PC-9 (cell line): ENCODE measurements at regions of chr16 and their contacts with region 1.

Region 1: DNA sequence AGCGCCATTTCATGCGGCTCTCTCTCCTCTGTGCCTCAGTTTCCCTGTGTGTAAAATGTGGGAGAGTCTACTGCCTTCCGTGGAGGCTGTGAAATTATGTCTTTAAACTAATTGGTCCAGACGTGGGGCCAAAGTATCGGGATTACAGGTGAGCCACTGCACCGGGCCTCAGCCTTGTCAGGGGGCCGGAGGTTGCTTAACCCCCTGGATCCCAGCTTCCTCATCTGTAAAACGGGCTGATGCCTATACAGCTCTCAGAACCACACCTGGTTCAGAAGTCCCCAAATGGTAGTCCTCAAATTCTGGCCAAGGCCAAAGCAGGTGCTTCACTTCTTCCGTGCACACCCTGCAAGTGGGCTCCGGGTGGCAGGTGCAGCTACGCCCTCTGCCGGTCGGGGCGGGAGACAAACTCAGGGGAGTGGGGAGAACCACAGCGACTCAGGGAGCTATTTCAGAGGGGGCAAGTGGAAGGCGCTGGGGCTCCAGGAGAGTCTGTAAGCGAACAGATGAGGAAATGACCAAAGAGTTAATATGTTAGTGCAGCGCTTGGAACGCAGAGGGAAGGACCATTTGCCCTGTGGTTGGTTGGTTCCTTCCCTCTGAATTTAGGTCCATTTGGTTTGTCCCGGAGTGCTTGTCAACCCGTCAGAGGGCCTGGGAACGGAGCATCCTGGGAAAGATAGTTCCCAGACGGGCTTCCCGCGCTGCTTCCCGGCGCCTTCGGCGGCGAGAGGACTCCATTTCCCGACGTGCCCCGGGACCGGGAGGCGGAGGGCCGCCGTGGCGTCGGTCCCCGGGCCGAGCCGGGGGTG is at the start of gene MGRN1:
- DNase-seq: peak; percentile 90 to 97
- H3K4me3 ChIP-seq: peak within 1 kb of the TSS; percentile 99
- H3K27ac ChIP-seq: peak within 1 kb of the TSS; percentile 69
- H3K4me1 ChIP-seq: peaks cover 7% of the 10 kb centered on the region
- H3K27me3 ChIP-seq: no peaks in the 10 kb centered on the region
- CTCF ChIP-seq: peak; percentile 96
- total RNA-seq, gene MGRN1: 67.9 and 70.4 TPM in 2 replicates

Region 2: GRCh38 chr16:4517812-4518680 is 106.2 kb before region 1 on chr16:
- CTCF ChIA-PET with region 1: interaction called, 4 read pairs
- POLR2A ChIA-PET with region 1: no interaction called
- intact Hi-C with region 1: loop called (anchors 1 kb)
- DNase-seq: peak in 1 of 2 experiments; percentile 45
- H3K4me3 ChIP-seq: no peak overlapping the region
- H3K27ac ChIP-seq: no peak overlapping the region
- H3K4me1 ChIP-seq: no peaks in the 10 kb centered on the region
- H3K27me3 ChIP-seq: no peaks in the 10 kb centered on the region
- CTCF ChIP-seq: peak; percentile 74

Region 3: DNA sequence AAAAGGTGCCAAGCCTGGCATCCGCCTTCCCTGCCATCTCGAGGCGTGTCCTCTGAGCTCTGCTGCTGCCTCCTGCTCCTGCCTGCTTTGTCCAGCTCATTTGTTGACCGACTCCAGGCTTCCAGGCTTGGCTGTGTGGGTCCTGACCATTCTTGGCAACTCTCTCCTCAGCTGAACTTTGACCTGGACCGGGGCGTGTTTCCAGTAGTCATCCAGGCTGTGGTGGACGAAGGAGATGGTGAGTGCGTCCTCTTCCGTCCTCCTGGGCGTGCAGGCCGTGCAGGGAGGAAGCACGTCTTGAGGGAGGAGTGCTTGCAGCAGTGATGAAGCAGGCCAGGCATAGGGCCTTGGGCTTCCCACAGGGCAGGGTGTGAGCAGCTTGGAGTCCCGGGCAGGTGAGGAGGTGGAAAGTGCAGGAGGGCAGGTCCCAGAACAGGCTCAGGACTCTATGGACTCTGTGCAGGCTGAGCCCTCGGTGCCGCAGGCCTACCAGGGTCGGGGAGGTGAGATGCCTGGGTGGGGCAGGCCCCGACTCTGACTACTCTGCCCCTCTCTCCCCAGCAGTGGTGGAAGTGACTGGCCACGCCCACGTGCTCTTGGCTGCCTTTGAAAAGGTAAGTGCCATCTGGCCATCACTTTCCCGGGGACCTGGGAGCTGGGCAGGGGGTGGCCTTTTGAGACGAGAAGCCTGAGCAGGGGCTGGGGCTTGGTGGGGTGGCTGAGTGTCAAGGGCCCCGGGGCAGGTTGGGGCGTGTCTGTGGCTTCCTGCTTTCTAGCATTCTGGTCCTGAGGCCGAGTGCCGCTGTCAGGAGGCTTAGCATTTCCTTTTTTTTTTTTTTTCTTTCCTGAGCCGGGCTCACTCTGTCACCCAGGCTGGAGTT is 40.6 kb after region 1 on chr16:
- CTCF ChIA-PET with region 1: no interaction called
- POLR2A ChIA-PET with region 1: no interaction called
- intact Hi-C with region 1: no loop called
- DNase-seq: peak in 1 of 2 experiments; percentile 73
- H3K4me3 ChIP-seq: no peak overlapping the region
- H3K27ac ChIP-seq: no peak overlapping the region
- H3K4me1 ChIP-seq: no peaks in the 10 kb centered on the region
- H3K27me3 ChIP-seq: no peaks in the 10 kb centered on the region
- CTCF ChIP-seq: no peak

Region 4: DNA sequence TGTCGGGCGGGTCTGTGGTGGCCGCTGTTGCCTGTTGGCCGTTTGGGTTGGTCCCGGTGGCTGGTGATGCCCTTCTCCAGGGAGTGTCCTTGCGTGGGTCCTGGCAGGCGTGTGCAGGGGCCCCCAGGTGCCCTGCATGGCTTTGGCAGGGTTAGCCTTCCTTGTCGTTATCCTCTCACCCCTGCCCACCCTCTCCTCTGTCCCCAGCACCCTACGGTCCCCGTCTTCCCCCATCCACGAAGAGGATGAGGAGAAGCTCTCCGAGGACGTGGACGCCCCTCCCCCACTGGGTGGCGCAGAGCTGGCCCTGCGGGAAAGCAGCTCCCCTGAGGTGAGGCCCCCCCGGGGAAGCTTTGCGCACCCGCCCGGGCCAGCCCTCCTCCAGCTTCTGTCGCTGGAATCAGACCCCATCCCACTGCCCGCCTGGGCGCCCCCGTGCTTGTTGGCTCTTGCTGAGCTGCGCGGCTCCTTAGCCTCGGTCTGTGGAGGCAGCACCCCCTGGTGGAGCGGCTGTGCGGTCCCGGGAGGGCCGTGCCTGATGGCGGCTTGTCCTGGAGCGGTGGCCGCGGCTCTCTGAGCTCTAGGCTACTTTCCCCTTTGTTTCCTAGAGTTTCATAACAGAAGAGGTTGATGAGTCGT is 58.5 kb after region 1 on chr16:
- CTCF ChIA-PET with region 1: interaction called, 6 read pairs
- POLR2A ChIA-PET with region 1: no interaction called
- intact Hi-C with region 1: loop called (anchors 1 kb)
- DNase-seq: peak; percentile 57 to 71
- H3K4me3 ChIP-seq: no peak overlapping the region
- H3K27ac ChIP-seq: no peak overlapping the region
- H3K4me1 ChIP-seq: peaks cover 65% of the 10 kb centered on the region
- H3K27me3 ChIP-seq: no peaks in the 10 kb centered on the region
- CTCF ChIP-seq: peak; percentile 64

Region 5: DNA sequence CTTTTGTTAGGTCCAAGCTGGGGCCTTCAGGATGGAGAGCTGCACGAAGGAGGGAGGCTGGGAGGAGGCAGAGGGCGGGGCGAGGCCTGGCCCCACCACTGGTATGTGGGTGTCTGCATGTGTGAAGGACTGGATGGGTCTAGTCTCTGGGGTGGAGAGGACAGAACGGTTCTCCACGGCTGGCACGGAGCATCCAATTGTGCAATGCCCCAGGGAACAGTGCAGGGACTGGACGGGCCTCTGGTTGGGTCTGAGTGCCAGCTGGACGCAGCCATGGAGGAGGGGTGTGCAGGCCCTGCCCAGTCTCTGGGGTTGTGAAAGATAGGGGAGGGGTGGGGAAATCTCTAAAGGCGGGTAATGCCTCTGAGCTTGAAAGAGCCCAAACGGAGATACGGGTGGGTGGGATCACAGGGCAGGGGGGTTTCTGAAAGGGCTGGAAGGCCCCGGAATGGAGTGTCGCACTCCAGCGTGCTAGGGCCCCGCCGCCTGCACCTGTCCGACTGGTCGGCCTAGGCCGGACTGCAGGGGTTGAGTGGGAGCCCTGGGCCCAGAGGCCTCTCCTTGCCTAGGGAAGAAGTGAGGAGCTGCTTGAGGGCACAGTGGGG is 311.1 kb after region 1 on chr16:
- CTCF ChIA-PET with region 1: no interaction called
- POLR2A ChIA-PET with region 1: no interaction called
- intact Hi-C with region 1: no loop called
- DNase-seq: peak in 1 of 2 experiments; percentile 72
- H3K4me3 ChIP-seq: peak overlapping the region; percentile 99
- H3K27ac ChIP-seq: 0 out of 2 replicates have a peak overlapping the region, but pooled peaks have one; percentile 7
- H3K4me1 ChIP-seq: peaks cover 28% of the 10 kb centered on the region
- H3K27me3 ChIP-seq: no peaks in the 10 kb centered on the region
- CTCF ChIP-seq: no peak